ENCODE measurements at regions of chr2 and their contacts with region 1.

Region 1: GRCh38 chr2:75041731-75042600 is 83.5 kb downstream of the POLE4 start:
- DNase-seq: no peak

Region 2: DNA sequence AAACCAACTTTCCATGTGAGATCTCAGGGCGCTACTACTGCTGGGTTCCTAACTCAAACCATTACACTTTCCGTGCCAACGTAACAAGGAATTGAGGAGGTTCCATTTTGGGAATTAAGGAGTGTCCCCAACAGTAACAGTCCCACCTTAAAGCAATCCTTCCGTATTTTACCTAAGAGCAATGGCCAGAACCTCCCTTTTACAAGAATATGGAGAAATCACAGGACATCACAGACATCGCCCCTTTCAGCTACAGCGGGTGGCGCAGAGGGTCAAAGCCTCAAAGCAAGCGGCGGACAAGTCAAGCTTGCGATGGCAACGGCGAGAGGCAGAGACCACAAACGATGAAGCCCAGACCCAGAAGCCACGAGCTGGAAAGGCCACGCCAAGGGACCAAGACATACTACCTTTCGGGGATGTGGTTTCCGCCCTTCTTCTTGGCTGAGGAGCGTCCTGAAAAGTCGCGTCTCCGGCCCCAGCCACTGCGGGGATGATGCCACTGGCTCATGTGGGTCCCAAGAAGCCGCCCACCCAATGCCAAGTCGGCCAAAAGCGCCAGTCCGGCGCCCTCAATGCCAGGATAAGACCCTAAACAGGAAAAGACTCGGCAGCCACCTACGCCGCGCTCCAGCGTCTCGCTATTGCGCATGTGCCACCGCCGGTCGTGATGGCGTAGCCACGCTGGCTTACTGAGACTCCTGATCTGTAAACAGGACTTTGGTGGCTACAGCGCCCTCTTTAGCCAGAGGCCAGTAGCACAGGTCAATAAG is 1262.3 kb before region 1 on chr2 and contains the start of gene DUSP11:
- intact Hi-C with region 1: no loop called
- DNase-seq: peak; percentile 98
- total RNA-seq, gene DUSP11: 17.0 to 17.3 TPM

Region 3: DNA sequence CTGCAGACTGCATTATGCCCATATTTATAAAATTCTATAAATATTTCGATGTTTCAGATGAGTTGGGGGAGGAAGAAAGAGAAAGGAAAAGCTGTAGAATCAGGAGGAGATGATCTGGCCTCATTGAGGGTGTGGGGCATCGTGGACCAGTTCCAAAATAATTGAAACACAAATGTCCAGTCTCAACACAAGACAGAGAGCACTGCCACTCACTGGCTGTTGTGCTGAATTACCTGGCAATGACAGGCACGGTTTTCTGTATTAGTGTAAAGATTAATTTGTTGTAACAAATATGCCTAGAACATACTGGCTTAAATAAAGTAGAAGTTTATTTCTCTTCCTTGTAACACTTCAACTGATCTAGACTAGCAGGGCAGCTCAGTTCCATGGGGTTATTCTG is 59.4 kb before region 1 on chr2:
- intact Hi-C with region 1: loop called in 1 of 2 experiments (anchors 5 kb)
- DNase-seq: no peak